Activated CD4-positive, alpha-beta T cell treated with anti-CD3 and anti-CD28 coated beads for 36 hours (primary cell): ENCODE measurements at regions of chr2 and their contacts with region 1.

Region 1: GRCh38 chr2:9423100-9423921 is at the starts of genes CPSF3 and ITGB1BP1:
- DNase-seq: peak; percentile 99
- ATAC-seq: peak; percentile 89
- H3K4me3 Mint-ChIP-seq: no peak within 1 kb of the TSS
- H3K27ac Mint-ChIP-seq: peak within 1 kb of the TSS; percentile 94
- H3K4me1 Mint-ChIP-seq: peaks cover 36% of the 10 kb centered on the region
- H3K27me3 Mint-ChIP-seq: no peaks in the 10 kb centered on the region
- total RNA-seq, gene CPSF3: 72.3 to 103 TPM
- total RNA-seq, gene ITGB1BP1: 89.7 to 92.1 TPM

Region 2: GRCh38 chr2:8412586-8412985 is 1010.7 kb before region 1 on chr2:
- CTCF ChIA-PET with region 1: no interaction called
- POLR2A ChIA-PET with region 1: no interaction called
- intact Hi-C with region 1: no loop called
- DNase-seq: no peak
- ATAC-seq: no peak
- H3K4me3 Mint-ChIP-seq: no peak overlapping the region
- H3K27ac Mint-ChIP-seq: no peak overlapping the region
- H3K4me1 Mint-ChIP-seq: peaks cover 25% of the 10 kb centered on the region
- H3K27me3 Mint-ChIP-seq: peaks cover 6% of the 10 kb centered on the region

Region 3: DNA sequence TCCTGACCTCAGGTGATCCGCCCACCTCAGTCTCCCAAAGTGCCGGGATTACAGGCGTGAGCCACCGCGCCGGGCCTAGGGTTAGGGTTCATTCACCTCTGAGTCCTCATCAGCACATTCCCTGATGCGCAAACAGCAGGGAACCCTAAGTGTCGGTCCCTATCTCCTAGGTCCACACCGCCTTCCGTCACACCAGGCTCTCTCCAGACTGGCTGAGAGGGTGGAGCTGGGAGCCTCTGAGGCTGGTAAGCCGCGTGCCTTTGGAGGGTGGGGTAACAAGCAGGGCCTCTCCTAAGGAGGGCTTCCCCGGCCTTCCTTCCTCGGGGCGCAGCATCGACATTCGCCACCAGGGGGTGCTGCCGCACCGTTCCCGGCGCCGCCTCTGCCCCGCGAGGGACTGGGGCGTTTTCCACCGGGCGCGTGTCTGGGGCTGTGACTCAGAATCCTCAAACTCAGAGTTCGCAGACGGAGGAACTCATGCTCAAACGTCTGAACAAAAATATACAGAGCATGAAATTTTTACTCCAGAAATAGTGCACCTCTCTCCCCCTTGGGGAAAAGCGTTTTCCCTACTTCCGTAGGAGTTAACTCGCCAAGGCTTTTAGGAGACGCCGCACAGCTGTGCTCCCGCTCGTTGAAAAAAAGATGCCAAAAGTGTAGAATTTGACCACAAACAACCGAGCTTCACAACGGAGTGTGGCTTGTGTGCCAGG is 280.6 kb before region 1 on chr2:
- CTCF ChIA-PET with region 1: interaction called, 6 read pairs
- POLR2A ChIA-PET with region 1: no interaction called
- intact Hi-C with region 1: loop called in 1 of 2 experiments (anchors 1 kb)
- DNase-seq: peak; percentile 90
- ATAC-seq: peak; percentile 93
- H3K4me3 Mint-ChIP-seq: no peak overlapping the region
- H3K27ac Mint-ChIP-seq: no peak overlapping the region
- H3K4me1 Mint-ChIP-seq: no peaks in the 10 kb centered on the region
- H3K27me3 Mint-ChIP-seq: peaks cover 14% of the 10 kb centered on the region

Region 4: GRCh38 chr2:9613291-9613690 is 190.0 kb after region 1 on chr2:
- CTCF ChIA-PET with region 1: no interaction called
- POLR2A ChIA-PET with region 1: no interaction called
- intact Hi-C with region 1: loop called in 1 of 2 experiments (anchors 5 kb)
- DNase-seq: no peak
- ATAC-seq: no peak
- H3K4me3 Mint-ChIP-seq: no peak overlapping the region
- H3K27ac Mint-ChIP-seq: peak overlapping the region; percentile 27
- H3K4me1 Mint-ChIP-seq: peaks cover 95% of the 10 kb centered on the region
- H3K27me3 Mint-ChIP-seq: no peaks in the 10 kb centered on the region

Region 5: DNA sequence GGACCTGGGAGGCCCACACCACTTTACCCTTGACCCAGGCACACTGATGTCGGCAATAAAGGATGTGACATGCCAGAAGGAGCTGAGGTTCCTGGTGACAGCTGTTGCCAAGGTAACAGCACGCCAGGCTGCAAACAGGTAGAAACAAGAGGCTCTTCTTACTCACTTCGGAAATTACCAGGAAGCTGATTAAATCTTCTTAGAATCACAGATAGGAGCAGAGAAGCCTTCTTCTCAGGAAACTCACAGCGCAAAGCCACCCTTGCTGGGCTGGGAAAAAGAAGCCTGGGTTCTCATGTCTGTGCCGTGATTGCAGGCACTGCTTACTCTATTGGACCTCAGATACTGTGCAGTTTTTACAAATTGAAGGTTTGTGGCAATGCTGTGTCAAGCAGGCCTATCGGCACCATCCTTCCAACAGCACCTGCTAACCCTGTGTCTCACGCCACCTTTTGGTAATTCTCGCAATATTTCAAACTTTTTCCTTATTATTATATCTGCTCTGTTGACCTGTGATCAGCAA is 358.9 kb after region 1 on chr2:
- CTCF ChIA-PET with region 1: no interaction called
- POLR2A ChIA-PET with region 1: interaction called, 4 read pairs
- intact Hi-C with region 1: loop called in 1 of 2 experiments (anchors 1 kb)
- DNase-seq: peak; percentile 89
- ATAC-seq: peak; percentile 80
- H3K4me3 Mint-ChIP-seq: peak overlapping the region; percentile 53
- H3K27ac Mint-ChIP-seq: peak overlapping the region; percentile 93
- H3K4me1 Mint-ChIP-seq: peaks cover 57% of the 10 kb centered on the region
- H3K27me3 Mint-ChIP-seq: no peaks in the 10 kb centered on the region

Region 6: GRCh38 chr2:10043906-10044601 is 620.7 kb after region 1 on chr2:
- CTCF ChIA-PET with region 1: no interaction called
- POLR2A ChIA-PET with region 1: no interaction called
- intact Hi-C with region 1: loop called in 1 of 2 experiments (anchors 1 kb)
- DNase-seq: peak; percentile 95
- ATAC-seq: peak; percentile 81
- H3K4me3 Mint-ChIP-seq: peak overlapping the region; percentile 66
- H3K27ac Mint-ChIP-seq: peak overlapping the region; percentile 78
- H3K4me1 Mint-ChIP-seq: peaks cover 12% of the 10 kb centered on the region
- H3K27me3 Mint-ChIP-seq: peaks cover 3% of the 10 kb centered on the region

Region 7: GRCh38 chr2:10434886-10435819 is 1011.8 kb after region 1 on chr2:
- CTCF ChIA-PET with region 1: no interaction called
- POLR2A ChIA-PET with region 1: no interaction called
- intact Hi-C with region 1: no loop called
- DNase-seq: peak; percentile 85
- ATAC-seq: peak; percentile 56
- H3K4me3 Mint-ChIP-seq: no peak overlapping the region
- H3K27ac Mint-ChIP-seq: no peak overlapping the region
- H3K4me1 Mint-ChIP-seq: peaks cover 11% of the 10 kb centered on the region
- H3K27me3 Mint-ChIP-seq: peaks cover 6% of the 10 kb centered on the region